WTC11 (cell line): ENCODE measurements at regions of chr17 and their contacts with region 1.

Region 1: DNA sequence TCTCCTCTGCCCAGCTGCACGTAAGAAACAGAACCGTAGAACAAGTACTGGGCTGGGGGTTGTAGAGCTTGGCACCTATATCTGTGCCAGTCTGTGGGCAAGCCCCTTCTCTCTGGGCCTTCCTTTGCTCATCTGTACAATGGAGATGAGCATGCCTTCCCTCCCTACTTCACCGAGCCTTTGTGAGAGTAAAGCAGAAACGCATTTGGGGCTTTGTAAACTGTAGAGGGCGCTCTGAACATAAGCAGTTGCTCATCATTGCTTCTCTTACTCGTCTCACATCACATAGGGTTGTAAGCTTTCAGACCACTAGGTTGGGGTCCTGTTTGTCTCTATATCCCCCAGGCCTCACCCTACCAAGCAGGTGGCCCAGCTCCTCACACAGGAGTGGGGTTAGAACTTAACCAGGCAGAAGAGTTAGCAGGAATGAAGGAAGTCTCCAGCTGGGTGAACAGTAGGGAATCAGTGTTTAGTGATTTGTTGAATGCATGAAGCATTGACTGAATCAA is 15.1 kb downstream of the SAMD14 start:
- DNase-seq: peak; percentile 55
- ATAC-seq: peak; percentile 55
- H3K4me3 Mint-ChIP-seq: peak overlapping the region; percentile 1; the same call in 1 of the 2 replicates
- H3K27ac Mint-ChIP-seq: no peak overlapping the region
- H3K4me1 Mint-ChIP-seq: peaks cover 21% of the 10 kb centered on the region
- H3K27me3 Mint-ChIP-seq: peaks cover 44% of the 10 kb centered on the region
- CTCF ChIP-seq: peak; percentile 40; the same call in 1 of the 2 replicates

Region 2: GRCh38 chr17:50101346-50102163 is 13.3 kb before region 1 on chr17:
- CTCF ChIA-PET with region 1: interaction called, 118 read pairs
- POLR2A ChIA-PET with region 1: no interaction called
- DNase-seq: no peak
- ATAC-seq: peak; percentile 66
- H3K4me3 Mint-ChIP-seq: no peak overlapping the region; the same call in 1 of the 2 replicates
- H3K27ac Mint-ChIP-seq: no peak overlapping the region
- H3K4me1 Mint-ChIP-seq: peaks cover 18% of the 10 kb centered on the region
- H3K27me3 Mint-ChIP-seq: no peaks in the 10 kb centered on the region
- CTCF ChIP-seq: no peak

Region 3: DNA sequence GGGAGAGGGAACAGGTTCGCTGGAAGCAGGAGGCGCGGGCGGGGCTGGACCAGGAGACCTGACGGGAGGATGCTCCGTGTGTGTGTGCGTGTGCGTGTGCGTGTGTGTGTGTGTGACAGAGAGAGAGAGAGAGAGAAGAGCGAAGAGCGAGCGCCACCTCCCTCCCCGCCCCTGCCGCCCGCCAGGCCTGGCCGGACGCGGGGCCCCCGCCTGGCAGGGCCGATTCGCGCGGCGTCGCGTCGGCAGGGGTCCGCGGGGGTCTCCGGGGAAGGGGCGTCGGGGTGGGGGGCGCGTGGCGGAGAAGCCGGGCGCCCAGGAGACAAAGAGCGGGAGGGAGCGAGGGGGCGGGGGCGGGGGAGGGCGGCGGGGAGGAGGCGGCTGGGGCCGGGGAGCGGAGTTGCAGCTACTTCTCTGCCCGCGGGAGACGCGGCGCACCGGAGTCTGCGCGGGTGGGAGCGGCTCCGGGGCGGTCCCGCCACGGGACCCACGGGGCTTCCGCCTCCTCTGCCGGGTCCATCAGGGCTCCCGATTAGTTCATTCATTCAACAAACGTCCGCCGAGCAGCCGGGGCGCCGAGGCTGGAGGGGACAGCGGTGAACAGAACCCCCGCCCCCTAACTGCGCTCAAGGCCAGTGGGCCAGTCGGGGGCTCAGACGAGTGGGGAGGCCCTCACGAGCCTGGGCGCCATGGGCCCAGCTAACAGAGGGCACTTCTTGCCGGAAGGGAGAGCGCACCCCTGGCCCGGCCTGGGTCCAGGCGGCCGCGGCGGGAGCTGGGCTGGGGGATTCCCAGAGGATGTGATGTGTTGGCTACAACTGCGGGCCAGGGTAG is 15.0 kb after region 1 on chr17 and contains the start of gene SAMD14:
- CTCF ChIA-PET with region 1: interaction called, 18 read pairs
- POLR2A ChIA-PET with region 1: no interaction called
- DNase-seq: no peak
- ATAC-seq: peak; percentile 16
- H3K4me3 Mint-ChIP-seq: peak within 1 kb of the TSS; percentile 97
- H3K27ac Mint-ChIP-seq: no peak within 1 kb of the TSS
- H3K4me1 Mint-ChIP-seq: peaks cover 48% of the 10 kb centered on the region
- H3K27me3 Mint-ChIP-seq: peaks cover 26% of the 10 kb centered on the region
- CTCF ChIP-seq: no peak
- total RNA-seq, gene SAMD14: 4.5 to 6.0 TPM (median 5.9 TPM) in 3 replicates

Region 4: GRCh38 chr17:50139950-50140871 is 25.3 kb after region 1 on chr17:
- CTCF ChIA-PET with region 1: interaction called, 35 read pairs
- POLR2A ChIA-PET with region 1: no interaction called
- DNase-seq: peak; percentile 90
- ATAC-seq: peak; percentile 91
- H3K4me3 Mint-ChIP-seq: 0 out of 2 replicates have a peak overlapping the region, but pooled peaks have one; percentile 14
- H3K27ac Mint-ChIP-seq: no peak overlapping the region
- H3K4me1 Mint-ChIP-seq: peaks cover 14% of the 10 kb centered on the region
- H3K27me3 Mint-ChIP-seq: no peaks in the 10 kb centered on the region
- CTCF ChIP-seq: peak; percentile 99

Region 5: DNA sequence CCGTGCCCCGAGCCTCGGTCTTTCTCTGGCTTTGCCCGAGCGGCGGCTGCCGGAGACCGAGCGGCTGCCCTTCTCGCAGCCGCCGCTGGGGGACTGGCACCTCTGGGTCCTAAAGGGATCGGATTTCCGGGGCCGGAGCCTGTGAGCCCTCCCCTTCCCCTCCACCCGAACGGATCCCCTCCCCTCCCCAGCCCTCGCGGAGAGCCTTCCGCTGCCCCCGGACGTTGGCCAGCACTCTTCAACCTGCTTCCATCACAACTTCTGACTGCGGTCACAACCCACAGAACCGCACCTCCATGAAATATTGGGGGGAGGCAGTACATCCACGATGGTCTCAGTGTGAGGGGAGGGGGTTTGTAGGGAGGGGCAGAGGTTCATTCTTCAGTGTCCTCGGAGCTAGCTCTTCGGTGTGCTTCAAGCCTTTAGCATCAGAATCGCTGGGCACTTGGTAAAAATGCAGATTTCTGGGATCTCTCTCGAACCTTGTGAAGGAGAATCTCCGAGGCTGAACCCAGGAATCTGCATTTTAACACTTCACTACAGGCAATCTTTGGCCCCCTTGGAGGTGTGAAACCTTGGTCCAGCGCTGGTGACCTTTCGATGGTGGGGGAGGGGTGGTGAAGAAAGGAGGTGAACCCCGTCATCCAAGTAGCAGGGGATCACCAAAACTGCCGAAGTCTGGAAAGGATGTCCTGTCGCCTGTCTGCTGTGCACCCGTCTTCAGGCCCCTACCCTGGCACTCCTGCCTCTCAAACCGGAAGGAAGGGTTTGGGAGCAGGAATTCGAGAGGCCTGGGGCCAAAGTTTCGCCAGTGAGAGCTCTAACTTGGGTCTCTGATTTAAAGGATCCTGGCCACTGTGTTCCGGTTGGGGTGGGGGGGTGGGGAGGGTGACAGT is 36.4 kb after region 1 on chr17:
- CTCF ChIA-PET with region 1: interaction called, 27 read pairs
- POLR2A ChIA-PET with region 1: interaction called, 3 read pairs
- DNase-seq: peak; percentile 92
- ATAC-seq: peak; percentile 58
- H3K4me3 Mint-ChIP-seq: peak overlapping the region; percentile 75
- H3K27ac Mint-ChIP-seq: peak overlapping the region; percentile 95
- H3K4me1 Mint-ChIP-seq: peaks cover 38% of the 10 kb centered on the region
- H3K27me3 Mint-ChIP-seq: peaks cover 19% of the 10 kb centered on the region
- CTCF ChIP-seq: no peak

Region 6: DNA sequence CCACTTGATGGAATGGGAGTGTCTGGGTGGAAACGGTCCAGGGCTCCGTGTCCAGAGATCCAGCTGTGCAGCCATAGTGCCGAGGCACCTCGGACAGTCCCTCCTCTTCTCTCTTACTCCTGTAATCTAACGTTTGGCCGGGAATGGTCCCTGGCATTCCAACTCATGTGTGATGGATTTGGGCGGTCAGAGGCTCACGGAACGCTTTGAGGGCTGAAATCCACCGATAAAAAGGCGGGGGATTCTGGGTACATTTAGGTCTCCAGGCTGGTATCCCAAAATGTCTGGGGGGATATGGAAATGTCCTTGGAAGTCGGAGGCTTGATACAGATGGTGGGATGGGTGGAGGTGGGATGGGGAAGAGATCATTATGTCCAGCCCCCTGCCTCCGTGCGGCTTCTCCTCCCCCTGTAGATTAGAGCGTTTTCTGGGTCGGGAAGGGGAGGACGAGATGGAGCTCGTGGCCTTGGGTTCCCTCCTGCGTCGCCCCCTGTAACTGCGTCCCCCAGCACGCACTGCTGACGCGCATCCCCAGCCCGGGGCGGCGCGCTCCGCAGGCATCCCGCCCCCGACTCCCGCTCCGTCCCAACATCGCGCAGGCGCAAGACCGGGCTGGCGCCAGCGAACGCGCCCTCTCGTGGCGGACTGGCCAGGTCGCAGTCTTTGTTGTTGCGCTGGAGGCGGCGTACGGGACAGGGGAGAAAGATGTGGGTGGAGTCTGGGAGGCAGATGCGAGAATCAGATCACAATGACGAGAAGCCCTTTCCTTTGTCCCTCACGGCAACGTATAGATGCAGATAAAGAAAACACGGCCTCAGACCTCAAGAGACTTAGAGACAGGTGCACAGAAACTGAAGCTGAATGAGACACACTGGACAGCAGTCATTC is 46.4 kb after region 1 on chr17:
- CTCF ChIA-PET with region 1: interaction called, 46 read pairs
- POLR2A ChIA-PET with region 1: interaction called, 3 read pairs
- DNase-seq: peak; percentile 96
- ATAC-seq: peak; percentile 92
- H3K4me3 Mint-ChIP-seq: peak overlapping the region; percentile 79
- H3K27ac Mint-ChIP-seq: peak overlapping the region; percentile 51
- H3K4me1 Mint-ChIP-seq: peaks cover 10% of the 10 kb centered on the region
- H3K27me3 Mint-ChIP-seq: peaks cover 33% of the 10 kb centered on the region
- CTCF ChIP-seq: peak; percentile 64

Region 7: GRCh38 chr17:50194140-50194933 is 79.4 kb after region 1 on chr17:
- CTCF ChIA-PET with region 1: no interaction called
- POLR2A ChIA-PET with region 1: no interaction called
- DNase-seq: no peak
- ATAC-seq: no peak
- H3K4me3 Mint-ChIP-seq: no peak overlapping the region
- H3K27ac Mint-ChIP-seq: no peak overlapping the region
- H3K4me1 Mint-ChIP-seq: 0 out of 2 replicates have a peak, but pooled peaks cover 2% of the 10 kb centered on the region
- H3K27me3 Mint-ChIP-seq: peaks cover 5% of the 10 kb centered on the region
- CTCF ChIP-seq: no peak